CD4-positive, alpha-beta memory T cell (primary cell): ENCODE measurements at regions of chr12 and their contacts with region 1.

Region 1: DNA sequence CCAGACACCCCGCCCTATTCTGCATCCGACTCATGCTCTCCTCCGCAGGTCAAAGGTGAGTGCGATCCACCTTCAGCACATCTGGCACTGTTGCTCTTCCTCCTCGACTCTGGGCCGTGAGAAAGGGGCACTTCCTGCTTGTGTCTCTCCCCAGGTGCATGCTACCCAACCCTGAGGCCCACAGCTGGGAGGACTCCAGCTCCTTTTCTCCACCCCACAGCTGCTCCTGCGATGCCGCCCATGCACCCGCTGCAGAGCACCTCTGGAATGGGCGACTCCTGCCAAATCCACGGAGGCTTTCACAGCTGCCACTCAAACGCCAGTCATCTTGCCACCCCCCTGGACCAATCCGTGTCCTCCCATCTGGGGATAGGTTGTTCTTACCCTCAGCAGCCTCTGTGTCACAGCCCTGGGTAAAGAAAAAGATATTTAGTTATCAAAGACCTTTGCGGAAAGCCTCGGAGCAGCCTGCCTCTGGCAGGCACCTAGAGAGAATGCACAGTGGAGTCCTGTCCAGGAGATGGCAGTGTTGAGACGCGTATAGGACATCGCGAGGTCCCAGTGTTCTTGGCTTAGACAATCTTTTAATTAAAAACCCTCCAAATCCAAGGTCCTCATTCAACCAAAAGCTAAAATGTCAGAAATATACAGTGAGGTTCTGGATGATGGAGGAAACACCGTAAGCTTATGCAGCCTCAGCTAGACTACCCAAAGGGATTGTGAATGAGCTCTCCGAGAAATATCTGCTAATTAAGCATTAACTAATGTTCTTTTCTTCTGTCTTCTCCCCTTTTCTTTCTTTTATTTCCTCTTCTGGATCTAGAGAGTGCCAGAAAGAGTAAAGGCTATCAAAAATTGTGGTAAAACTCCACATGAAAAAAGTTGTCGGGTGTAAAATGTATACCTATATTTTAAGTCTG is 54.3 kb downstream of the MYRFL start:
- DNase-seq: peak; percentile 42 to 57 (median 49)
- H3K4me3 ChIP-seq: no peak overlapping the region
- H3K4me3 Mint-ChIP-seq: peak overlapping the region in 2 of 8 donors; percentile 31 to 45
- H3K27ac ChIP-seq: no peak overlapping the region
- H3K27ac Mint-ChIP-seq: peak overlapping the region in 1 of 7 donors; percentile 15
- H3K4me1 ChIP-seq: no peaks in the 10 kb centered on the region
- H3K4me1 Mint-ChIP-seq: peaks cover 0 to 11% (median 3%) of the 10 kb centered on the region in 4 donors
- H3K27me3 ChIP-seq: no peaks in the 10 kb centered on the region
- H3K27me3 Mint-ChIP-seq: peaks cover 0 to 19% of the 10 kb centered on the region in 2 donors

Region 2: GRCh38 chr12:69868695-69869094 is 10.6 kb before region 1 on chr12:
- CTCF ChIA-PET with region 1: interaction called, 14 read pairs
- POLR2A ChIA-PET with region 1: no interaction called
- intact Hi-C with region 1: no loop called
- DNase-seq: no peak
- H3K4me3 ChIP-seq: no peak overlapping the region
- H3K4me3 Mint-ChIP-seq: no peak overlapping the region
- H3K27ac ChIP-seq: no peak overlapping the region
- H3K27ac Mint-ChIP-seq: no peak overlapping the region
- H3K4me1 ChIP-seq: no peaks in the 10 kb centered on the region
- H3K4me1 Mint-ChIP-seq: no peaks in the 10 kb centered on the region
- H3K27me3 ChIP-seq: no peaks in the 10 kb centered on the region
- H3K27me3 Mint-ChIP-seq: peaks cover 6 to 11% of the 10 kb centered on the region in 2 donors

Region 3: DNA sequence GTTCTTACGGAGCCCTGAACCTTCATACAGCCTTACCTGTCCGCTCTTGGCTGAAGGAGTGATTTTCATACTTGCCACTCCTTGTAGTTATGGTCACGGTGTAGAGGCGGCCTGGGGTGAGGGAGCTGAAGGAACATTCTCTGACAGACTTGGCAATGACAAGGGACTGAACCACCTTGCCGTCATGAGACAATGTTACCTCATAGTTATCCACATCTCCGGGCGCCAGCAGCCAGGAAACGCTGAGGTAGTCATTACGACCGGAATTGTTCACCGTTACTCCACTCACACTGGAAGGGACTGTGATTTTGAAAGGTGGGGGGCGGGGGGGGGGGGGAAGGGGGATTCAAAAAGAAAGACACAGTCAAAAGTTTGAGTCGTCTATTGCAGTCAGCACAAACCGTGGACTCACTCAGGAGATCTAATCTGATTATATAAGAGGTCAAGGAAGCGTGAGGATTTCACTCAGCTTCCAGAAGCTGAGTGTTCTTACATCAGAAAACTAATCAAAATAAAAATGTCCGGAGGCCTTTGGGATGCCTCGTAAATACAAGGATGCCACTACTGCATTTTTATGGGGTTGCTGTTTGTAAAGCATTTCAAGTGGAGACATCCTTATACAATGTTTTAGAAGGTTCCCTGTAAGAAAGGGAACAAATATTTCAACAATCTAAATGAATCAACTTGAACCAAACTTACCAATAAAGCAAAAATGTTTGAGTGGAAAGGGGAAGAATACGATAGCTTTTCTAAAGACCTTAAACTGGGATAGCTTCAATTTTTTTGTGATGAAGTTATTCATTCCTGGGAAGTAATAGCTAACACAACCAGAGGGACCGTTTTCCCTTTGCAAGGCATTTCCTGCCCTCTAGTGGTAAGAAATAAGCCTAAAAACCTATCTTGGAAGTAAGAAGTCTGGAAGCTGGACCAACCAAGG is 697.3 kb after region 1 on chr12:
- CTCF ChIA-PET with region 1: interaction called, 53 read pairs
- POLR2A ChIA-PET with region 1: interaction called, 4 read pairs
- intact Hi-C with region 1: loop called (anchors 1 kb)
- DNase-seq: peak in 4 of 5 donors; percentile 38 to 47 (median 42)
- H3K4me3 ChIP-seq: no peak overlapping the region
- H3K4me3 Mint-ChIP-seq: no peak overlapping the region
- H3K27ac ChIP-seq: no peak overlapping the region
- H3K27ac Mint-ChIP-seq: no peak overlapping the region
- H3K4me1 ChIP-seq: no peaks in the 10 kb centered on the region
- H3K4me1 Mint-ChIP-seq: no peaks in the 10 kb centered on the region
- H3K27me3 ChIP-seq: no peaks in the 10 kb centered on the region
- H3K27me3 Mint-ChIP-seq: peaks cover 7 to 18% of the 10 kb centered on the region in 2 donors

Region 4: DNA sequence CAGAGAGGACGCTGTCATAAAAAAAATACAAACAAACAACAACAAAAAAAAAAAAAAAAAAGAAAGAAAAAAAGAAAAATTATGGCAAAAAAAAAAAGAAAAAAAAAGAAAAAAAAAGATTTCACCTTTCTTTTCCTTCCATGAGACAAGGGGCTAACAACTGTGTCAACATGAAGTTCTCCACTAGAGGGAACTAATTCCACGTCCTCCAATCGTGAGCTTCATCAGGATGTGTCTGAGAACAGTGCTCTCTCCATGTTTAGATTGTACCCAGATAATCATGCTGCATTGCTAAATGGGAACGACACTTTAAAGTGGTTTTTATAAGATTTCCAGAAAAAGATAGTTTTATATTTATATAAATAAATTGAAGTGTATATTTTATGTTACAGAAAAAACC is 854.1 kb after region 1 on chr12:
- CTCF ChIA-PET with region 1: interaction called, 14 read pairs
- POLR2A ChIA-PET with region 1: no interaction called
- intact Hi-C with region 1: no loop called
- DNase-seq: peak in 2 of 5 donors; percentile 11 to 30
- H3K4me3 ChIP-seq: no peak overlapping the region
- H3K4me3 Mint-ChIP-seq: no peak overlapping the region
- H3K27ac ChIP-seq: no peak overlapping the region
- H3K27ac Mint-ChIP-seq: no peak overlapping the region
- H3K4me1 ChIP-seq: no peaks in the 10 kb centered on the region
- H3K4me1 Mint-ChIP-seq: peaks cover 0 to 1% (median 0%) of the 10 kb centered on the region in 4 donors
- H3K27me3 ChIP-seq: no peaks in the 10 kb centered on the region
- H3K27me3 Mint-ChIP-seq: peaks cover 4 to 5% of the 10 kb centered on the region in 2 donors

Region 5: DNA sequence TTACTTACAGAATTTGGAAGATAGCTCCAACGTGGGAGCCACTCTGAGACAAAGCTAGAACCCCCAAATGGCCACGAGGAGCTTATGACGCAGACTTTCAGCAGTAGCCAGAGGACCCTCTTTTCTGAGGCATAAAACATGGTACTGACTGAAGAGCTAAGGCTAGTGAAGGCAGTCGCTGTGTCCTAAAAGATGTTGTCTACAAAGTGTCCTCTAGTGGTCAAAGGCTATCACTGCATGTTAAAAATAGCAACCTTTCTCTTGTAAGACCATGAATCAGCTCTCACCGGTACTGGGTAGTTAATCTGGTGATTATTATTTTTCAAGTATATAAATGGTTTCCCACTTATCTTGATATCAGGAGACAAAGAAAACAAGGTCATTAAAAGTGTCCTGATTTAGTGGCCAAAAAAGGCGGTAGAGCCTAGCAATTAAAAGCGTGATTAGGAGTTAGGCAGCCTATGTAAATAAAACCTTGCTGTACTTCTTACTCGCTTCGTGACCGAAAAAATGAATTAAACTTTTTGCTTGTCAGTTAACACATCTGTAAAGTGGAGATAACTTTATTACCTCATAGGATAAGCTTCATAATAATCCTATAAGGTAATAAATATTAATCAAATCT is 1513.3 kb after region 1 on chr12:
- CTCF ChIA-PET with region 1: interaction called, 4 read pairs
- POLR2A ChIA-PET with region 1: no interaction called
- intact Hi-C with region 1: loop called (anchors 5 kb)
- DNase-seq: peak in 3 of 5 donors; percentile 8 to 19 (median 11)
- H3K4me3 ChIP-seq: no peak overlapping the region
- H3K4me3 Mint-ChIP-seq: no peak overlapping the region
- H3K27ac ChIP-seq: no peak overlapping the region
- H3K27ac Mint-ChIP-seq: no peak overlapping the region
- H3K4me1 ChIP-seq: no peaks in the 10 kb centered on the region
- H3K4me1 Mint-ChIP-seq: no peaks in the 10 kb centered on the region
- H3K27me3 ChIP-seq: no peaks in the 10 kb centered on the region
- H3K27me3 Mint-ChIP-seq: peaks cover 4 to 5% of the 10 kb centered on the region in 2 donors